ENCODE measurements at regions of chr2 and their contacts with region 1.

Region 1: GRCh38 chr2:19347619-19348562 is 10.5 kb downstream of the OSR1 start:
- DNase-seq: peak; percentile 92
- ATAC-seq: peak; percentile 87
- H3K4me3 ChIP-seq: peak overlapping the region; percentile 80 to 93 (median 86)
- H3K27ac ChIP-seq: peak overlapping the region; percentile 69
- H3K4me1 ChIP-seq: peaks cover 27% of the 10 kb centered on the region
- H3K27me3 ChIP-seq: no peaks in the 10 kb centered on the region; a peak in 1 of 5 replicates
- CTCF ChIP-seq: peak; percentile 17; the same call in 1 of the 2 replicates
- EP300 ChIP-seq: no peak
- POLR2A ChIP-seq: peak; percentile 97 to 99
- RAD21 ChIP-seq: peak; percentile 44

Region 2: GRCh38 chr2:19336781-19337180 is 11.1 kb before region 1 on chr2:
- CTCF ChIA-PET with region 1: no interaction called
- POLR2A ChIA-PET with region 1: interaction called, 13 read pairs
- in situ Hi-C with region 1: no loop called
- intact Hi-C with region 1: no loop called
- DNase-seq: no peak
- ATAC-seq: no peak
- H3K4me3 ChIP-seq: no peak overlapping the region
- H3K27ac ChIP-seq: no peak overlapping the region
- H3K4me1 ChIP-seq: no peaks in the 10 kb centered on the region
- H3K27me3 ChIP-seq: no peaks in the 10 kb centered on the region
- CTCF ChIP-seq: no peak
- EP300 ChIP-seq: no peak
- POLR2A ChIP-seq: no peak
- RAD21 ChIP-seq: no peak

Region 3: DNA sequence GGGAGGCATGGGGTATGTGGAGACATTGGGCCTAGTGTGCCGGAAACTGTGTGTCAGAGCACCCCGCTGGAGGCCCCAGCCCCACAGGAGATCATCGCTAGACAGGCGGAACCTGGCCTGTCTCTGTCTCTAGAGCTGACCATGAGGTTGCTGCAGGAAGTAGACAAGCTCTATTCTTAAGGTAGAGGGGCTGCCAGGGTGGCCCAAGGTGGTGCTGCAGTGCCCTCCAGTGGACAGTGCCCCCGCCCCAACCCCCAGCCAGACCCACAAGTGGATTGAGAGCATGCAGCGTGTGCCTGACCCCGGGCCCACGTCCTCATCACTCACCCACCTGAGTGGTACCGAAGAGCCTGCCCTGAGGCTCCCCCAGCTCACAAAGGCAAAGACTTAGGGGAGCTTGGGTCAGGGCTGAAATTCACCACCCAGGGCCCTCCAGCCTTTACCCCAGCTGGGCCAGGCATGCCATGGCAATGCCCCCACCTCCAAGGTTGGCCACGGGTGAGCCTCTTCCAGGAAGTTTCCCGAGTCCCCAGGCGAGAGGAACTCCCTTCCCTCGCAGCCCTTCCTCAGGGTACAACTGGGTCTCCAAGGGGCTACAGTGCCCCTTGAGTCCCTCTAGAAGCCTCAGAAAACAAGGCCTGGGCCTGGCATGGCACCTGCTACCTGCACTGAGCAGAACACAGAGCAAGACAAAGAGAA is 398.9 kb after region 1 on chr2:
- CTCF ChIA-PET with region 1: interaction called, 3 read pairs
- POLR2A ChIA-PET with region 1: no interaction called
- in situ Hi-C with region 1: no loop called
- intact Hi-C with region 1: loop called (anchors 1 kb)
- DNase-seq: peak; percentile 19
- ATAC-seq: peak; percentile 75
- H3K4me3 ChIP-seq: no peak overlapping the region
- H3K27ac ChIP-seq: no peak overlapping the region
- H3K4me1 ChIP-seq: peaks cover 14% of the 10 kb centered on the region
- H3K27me3 ChIP-seq: peaks cover 4 to 17% of the 10 kb centered on the region in 2 experiments; a peak in 4 of 5 replicates
- CTCF ChIP-seq: peak; percentile 79
- EP300 ChIP-seq: no peak
- POLR2A ChIP-seq: no peak
- RAD21 ChIP-seq: peak; percentile 46

Measured in HepG2 (cell line).